ENCODE measurements at regions of chr15 and their contacts with region 1.

Region 1: DNA sequence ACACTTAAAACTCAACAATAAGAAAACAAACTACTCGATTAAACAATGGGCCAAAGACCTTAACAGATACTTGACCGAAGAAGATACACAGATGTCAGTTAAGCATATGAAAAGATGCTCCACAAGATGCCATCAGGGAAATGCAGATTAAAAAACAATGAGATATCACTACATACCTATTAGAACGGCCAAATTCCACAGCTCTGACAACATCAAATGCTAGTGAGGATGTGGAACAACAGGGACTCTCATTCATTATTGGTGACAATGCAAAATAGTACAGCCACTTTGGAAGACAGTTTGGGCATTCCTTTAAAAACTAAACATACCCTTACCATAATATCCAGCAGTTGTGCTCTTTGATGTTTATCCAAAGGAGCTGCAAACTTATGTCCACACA is 59.1 kb upstream of the UBE3A start:
- DNase-seq: no peak
- H3K4me3 ChIP-seq: no peak overlapping the region
- CTCF ChIP-seq: no peak
- POLR2A ChIP-seq: no peak

Region 2: GRCh38 chr15:25136119-25136518 is 361.8 kb before region 1 on chr15:
- intact Hi-C with region 1: loop called (anchors 10 kb)
- DNase-seq: no peak
- H3K4me3 ChIP-seq: no peak overlapping the region
- CTCF ChIP-seq: no peak
- POLR2A ChIP-seq: no peak

Measured in lower leg skin (tissue), 4 donors.